Brain microvascular endothelial cell (primary cell): ENCODE measurements at regions of chr12 and their contacts with region 1.

Region 1: DNA sequence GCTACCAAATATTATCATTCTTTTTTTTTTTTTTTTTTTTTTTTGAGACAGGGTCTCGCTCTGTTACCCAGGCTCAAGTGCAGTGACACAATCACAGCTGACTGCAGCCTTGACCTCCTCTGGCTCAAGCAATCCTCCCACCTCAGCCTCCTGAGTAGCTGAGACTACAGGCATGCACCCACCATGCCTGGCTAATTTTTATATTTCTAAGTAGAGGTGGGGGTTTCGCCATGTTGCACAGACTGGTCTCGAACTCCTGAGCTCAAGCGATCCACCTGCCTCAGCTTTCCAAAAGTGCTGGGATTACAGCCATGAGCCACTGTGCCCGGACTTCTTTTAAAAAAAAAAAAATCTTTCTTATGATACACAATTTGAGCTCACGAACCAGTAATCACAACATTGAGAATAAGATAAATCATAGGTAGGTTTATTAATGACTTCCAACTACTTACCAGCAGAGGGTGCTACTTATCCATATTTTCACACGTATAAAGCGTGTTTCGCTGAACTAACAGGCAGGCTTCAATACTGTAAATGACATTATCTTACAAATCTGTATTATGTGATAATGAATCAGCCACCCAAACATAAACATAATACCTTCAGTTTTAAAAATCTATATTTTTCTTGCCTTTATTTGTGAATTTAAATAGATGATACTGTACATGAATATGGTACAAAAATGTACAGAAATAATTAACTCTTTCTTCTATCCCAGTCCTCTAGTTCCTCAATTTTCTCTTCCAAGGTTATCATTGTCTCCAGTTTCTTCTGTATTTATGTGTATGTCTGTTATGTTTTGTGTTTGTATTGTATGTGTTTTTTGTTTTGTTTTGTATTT is 42.5 kb upstream of the BCAT1 start:
- DNase-seq: peak; percentile 43
- H3K4me3 ChIP-seq: no peak overlapping the region
- H3K27ac ChIP-seq: no peak overlapping the region
- H3K27me3 ChIP-seq: no peaks in the 10 kb centered on the region
- CTCF ChIP-seq: peak; percentile 24

Region 2: GRCh38 chr12:24879644-24880043 is 111.8 kb before region 1 on chr12:
- in situ Hi-C with region 1: no loop called
- DNase-seq: no peak
- H3K4me3 ChIP-seq: no peak overlapping the region
- H3K27ac ChIP-seq: no peak overlapping the region
- H3K27me3 ChIP-seq: no peaks in the 10 kb centered on the region
- CTCF ChIP-seq: no peak

Region 3: GRCh38 chr12:25130741-25131188 is 139.3 kb after region 1 on chr12:
- in situ Hi-C with region 1: loop called (anchors 25 kb)
- DNase-seq: peak; percentile 27
- H3K4me3 ChIP-seq: no peak overlapping the region
- H3K27ac ChIP-seq: no peak overlapping the region
- H3K27me3 ChIP-seq: no peaks in the 10 kb centered on the region
- CTCF ChIP-seq: peak; percentile 36

Region 4: DNA sequence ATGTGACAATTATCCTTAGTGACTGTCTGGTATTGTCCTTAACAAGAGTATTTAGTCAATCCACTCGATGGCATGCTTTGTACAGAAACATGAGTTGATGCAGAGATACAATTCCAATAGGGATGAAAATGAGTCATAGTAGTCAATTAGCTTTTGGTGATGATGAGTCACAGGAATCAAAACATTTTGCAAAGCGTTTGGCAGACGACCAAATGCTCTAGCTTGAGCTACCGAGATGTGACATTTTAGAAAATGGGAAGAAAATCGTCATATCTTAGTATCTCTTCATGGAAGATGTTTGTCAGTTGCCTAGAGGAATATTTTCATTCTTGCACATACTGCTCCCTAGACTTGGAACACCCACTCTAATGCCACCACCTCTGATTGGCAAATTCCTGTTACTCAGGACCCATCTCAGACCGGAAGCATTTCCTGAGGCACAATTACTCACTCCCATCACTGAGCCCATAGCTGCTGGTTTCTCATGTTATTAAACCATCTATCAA is 466.7 kb after region 1 on chr12:
- in situ Hi-C with region 1: no loop called
- DNase-seq: peak; percentile 94
- H3K4me3 ChIP-seq: no peak overlapping the region
- H3K27ac ChIP-seq: peak overlapping the region; percentile 12
- H3K27me3 ChIP-seq: no peaks in the 10 kb centered on the region
- CTCF ChIP-seq: no peak